Astrocyte of the cerebellum (primary cell): ENCODE measurements at regions of chr1 and their contacts with region 1.

Region 1: DNA sequence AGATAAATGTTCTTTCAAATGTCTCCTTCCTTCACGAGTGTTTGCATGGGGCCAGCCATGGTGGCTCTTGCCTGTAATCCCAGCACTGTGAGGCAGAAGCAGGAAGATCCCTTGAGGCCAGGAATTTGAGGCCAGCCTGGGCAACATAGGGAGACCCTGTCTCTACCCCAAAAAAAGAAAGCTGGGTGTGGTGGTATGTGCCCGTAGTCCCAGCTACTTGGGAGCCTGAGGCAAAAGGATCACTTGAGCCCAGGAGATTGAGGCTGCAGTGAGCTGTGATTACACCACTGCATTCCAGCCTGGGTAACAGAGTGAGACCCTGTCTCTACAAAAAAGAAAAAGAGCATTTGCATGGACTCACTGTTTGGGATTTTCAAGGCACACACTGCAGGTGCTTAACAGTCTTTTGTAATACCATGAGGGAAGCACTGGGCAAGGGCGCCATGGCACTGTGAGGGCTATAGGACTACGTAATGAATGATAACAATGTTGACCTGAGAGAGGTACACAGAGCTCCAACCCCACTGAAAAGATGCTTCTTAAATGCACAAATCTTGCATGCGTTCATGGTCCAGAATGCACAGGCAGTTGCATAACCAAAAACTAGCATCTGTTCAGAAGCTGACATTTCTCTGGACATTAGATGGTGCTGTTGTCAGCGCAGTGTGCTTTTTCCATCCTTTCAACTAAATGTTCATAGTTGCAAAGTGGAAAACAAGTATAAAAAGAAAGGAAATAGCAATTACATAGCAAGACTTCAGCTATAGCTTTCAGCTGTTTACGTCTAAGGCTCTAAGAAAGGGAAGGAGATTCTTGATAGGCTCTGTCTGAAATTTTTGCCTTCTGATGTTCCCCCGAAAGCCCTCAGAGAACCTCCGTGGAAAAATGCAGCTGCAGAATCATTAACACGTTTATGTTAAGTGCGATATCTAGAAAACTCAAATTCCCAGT is 7.8 kb upstream of the TARBP1 start:
- DNase-seq: peak; percentile 55
- H3K4me3 ChIP-seq: no peak overlapping the region
- CTCF ChIP-seq: peak; percentile 74

Region 2: GRCh38 chr1:234154320-234155251 is 332.2 kb before region 1 on chr1:
- in situ Hi-C with region 1: no loop called
- DNase-seq: peak; percentile 71
- H3K4me3 ChIP-seq: no peak overlapping the region
- CTCF ChIP-seq: peak; percentile 81

Region 3: DNA sequence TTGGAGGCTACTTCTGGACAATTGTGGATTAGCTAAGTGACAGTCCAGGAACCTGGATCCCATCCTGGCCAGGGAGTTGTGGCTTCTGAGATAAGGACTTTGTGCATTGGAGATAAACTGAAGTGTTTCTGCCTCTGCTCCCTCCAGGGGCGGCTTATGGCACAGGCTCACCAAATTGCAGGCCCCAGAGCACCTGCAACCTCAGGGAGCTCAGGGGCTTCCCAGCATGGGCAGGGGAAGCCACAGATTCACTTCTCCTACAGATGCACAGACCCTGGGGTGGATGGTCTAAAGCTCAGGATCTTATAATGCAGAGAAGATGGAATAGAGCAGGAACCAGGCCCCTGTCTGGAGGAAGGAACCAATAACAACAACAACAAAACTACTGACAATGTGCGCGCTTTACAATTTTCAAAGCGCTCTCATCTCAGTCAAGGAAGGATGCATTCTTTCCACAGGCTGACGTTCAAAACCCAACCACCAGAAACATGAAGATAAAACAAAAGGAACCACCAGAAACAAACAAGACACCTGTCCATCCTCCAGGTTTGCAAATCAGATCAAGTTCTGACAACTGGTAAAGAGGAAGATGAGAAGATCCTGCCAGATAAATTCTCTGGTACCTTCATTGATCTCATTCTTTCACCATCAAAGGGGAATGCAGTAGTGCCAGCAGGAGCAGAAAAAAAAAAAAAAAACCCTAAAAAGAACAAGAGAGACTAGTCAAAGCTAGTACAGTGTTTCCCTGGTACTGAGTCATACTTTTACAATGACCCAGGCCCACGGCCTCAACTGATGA is 244.2 kb after region 1 on chr1:
- in situ Hi-C with region 1: loop called (anchors 10 kb)
- DNase-seq: no peak
- H3K4me3 ChIP-seq: no peak overlapping the region
- CTCF ChIP-seq: no peak

Region 4: DNA sequence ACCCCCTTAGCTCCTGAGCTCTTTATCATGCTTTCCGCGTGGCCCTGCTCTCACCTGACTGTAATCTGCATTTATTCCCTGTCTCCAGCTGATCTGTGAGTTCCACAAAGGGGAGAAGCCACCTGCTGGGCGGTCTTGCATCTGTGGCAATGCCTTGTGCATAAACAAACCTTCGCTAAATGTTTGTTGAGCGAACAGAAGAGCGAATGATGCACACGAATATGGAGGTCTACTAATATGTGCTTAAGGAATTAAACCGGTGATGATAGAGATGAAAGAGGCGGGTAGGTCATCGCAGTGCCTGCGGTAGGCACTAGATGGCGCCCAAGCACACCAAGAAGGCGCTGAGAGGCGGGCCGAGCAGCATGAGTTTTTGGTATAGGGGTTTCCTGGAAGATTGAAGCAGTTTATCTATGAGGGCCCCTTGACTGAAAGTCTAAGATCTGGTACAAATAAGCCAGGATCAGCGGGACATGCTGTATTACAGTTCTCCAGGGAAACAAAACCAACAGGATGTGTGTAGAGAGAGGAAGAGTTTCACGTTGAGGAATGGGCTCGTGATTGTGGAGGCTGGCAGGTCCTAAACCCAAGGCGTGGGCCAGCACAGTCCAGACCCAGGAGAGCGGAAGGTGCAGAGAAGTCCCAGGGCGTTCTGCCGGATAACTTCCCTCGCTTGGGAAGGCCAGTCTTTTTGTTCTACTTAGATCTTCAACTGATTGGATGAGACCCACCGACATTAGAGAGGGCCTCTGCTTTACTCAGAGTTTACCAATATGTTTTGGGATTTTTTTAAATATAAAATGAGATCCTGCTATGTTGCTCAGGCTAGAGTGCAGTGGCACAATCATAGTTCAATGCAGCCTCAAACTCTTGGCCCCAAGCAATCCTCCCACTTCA is 607.2 kb after region 1 on chr1:
- in situ Hi-C with region 1: loop called (anchors 10 kb)
- DNase-seq: peak; percentile 42
- H3K4me3 ChIP-seq: no peak overlapping the region
- CTCF ChIP-seq: peak; percentile 94